Activated CD4-positive, alpha-beta T cell treated with anti-CD3 and anti-CD28 coated beads for 36 hours (primary cell): ENCODE measurements at regions of chr1 and their contacts with region 1.

Region 1: DNA sequence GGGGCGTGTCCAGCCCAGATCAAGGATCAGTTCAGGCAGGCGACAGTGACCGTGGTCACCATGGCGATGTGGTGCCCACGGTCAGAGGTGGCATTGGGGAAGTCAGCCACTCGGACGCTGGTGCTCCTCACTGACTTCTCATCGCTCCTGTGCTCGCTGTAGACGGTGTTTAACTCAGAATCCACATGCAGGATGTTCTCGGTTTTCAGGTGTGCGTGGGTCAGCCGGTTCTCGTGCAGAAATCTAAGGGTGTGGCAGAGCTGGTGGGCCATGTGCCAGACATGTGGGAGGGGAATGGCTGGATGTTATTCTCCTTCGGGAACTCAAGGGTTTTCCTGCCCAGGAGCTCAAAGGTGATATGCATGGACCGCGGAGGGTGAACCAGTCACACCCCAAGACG is 11.7 kb downstream of the OR2AJ1 start:
- DNase-seq: no peak
- ATAC-seq: no peak
- H3K4me3 Mint-ChIP-seq: no peak overlapping the region
- H3K27ac Mint-ChIP-seq: no peak overlapping the region
- H3K4me1 Mint-ChIP-seq: no peaks in the 10 kb centered on the region
- H3K27me3 Mint-ChIP-seq: peaks cover 2% of the 10 kb centered on the region

Region 2: DNA sequence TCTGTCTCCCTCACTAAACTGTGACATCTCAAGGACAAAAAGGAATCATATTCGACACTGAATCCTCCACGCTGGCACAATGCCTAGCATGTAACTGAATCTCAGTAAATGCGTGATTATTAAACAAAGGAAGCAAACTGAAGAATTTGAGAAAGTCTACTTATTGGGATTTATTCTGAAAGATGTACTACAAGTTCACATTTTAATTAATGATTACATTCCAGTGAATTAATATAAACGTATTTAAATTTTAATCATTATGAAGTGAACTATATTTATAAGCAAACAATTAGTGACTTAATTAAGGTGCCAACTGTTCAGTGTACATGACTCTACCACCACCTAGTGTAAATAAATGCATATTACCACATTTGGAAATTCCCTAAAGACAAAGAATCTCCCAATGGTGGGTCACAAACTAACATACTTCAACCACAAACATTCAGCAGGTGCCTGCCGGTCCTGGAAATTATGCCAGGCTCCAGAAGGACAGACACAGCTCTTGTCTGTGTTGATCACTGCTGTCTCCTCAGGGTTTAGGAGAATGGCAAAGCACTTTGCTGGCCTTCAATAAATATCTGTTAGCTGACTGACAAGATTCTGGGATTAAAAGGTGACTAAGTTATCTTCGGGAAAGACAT is 1485.7 kb before region 1 on chr1:
- CTCF ChIA-PET with region 1: no interaction called
- POLR2A ChIA-PET with region 1: no interaction called
- intact Hi-C with region 1: no loop called
- DNase-seq: no peak
- ATAC-seq: no peak
- H3K4me3 Mint-ChIP-seq: no peak overlapping the region
- H3K27ac Mint-ChIP-seq: no peak overlapping the region
- H3K4me1 Mint-ChIP-seq: peaks cover 13% of the 10 kb centered on the region
- H3K27me3 Mint-ChIP-seq: no peaks in the 10 kb centered on the region

Region 3: DNA sequence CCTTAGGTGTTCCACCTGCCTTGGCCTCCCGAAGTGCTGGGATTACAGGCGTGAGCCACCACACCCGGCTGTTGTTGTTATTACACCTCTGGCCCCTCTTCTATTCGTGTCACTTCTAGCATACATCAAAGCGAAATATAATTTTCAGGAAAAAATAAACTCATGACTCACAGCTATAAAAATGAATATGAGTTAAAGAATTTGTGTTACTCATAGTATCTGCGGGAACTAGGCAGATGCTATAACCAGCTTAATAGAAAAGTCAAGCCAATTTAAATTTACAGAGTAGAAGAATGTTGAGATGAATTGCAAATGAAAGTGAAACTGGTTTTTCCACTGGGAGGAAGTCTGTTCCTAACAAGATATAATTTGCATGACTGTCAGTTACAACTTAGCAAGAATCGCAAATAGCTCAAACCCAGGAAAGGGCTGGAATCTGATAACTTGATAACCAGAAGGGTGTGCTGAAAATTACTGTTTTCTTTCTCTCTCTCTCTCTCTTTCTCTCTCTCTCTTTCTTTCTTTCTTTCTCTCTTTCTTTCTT is 29.8 kb before region 1 on chr1:
- CTCF ChIA-PET with region 1: no interaction called
- POLR2A ChIA-PET with region 1: no interaction called
- intact Hi-C with region 1: loop called (anchors 1 kb)
- DNase-seq: peak; percentile 50
- ATAC-seq: peak; percentile 93
- H3K4me3 Mint-ChIP-seq: peak overlapping the region; percentile 53
- H3K27ac Mint-ChIP-seq: peak overlapping the region; percentile 61
- H3K4me1 Mint-ChIP-seq: peaks cover 33% of the 10 kb centered on the region
- H3K27me3 Mint-ChIP-seq: no peaks in the 10 kb centered on the region

Region 4: GRCh38 chr1:248622570-248623001 is 686.2 kb after region 1 on chr1:
- CTCF ChIA-PET with region 1: no interaction called
- POLR2A ChIA-PET with region 1: no interaction called
- intact Hi-C with region 1: loop called in 1 of 2 experiments (anchors 10 kb)
- DNase-seq: peak; percentile 11
- ATAC-seq: peak; percentile 80
- H3K4me3 Mint-ChIP-seq: no peak overlapping the region
- H3K27ac Mint-ChIP-seq: no peak overlapping the region
- H3K4me1 Mint-ChIP-seq: no peaks in the 10 kb centered on the region
- H3K27me3 Mint-ChIP-seq: no peaks in the 10 kb centered on the region

Region 5: GRCh38 chr1:248807067-248807737 is 870.8 kb after region 1 on chr1:
- CTCF ChIA-PET with region 1: interaction called, 5 read pairs
- POLR2A ChIA-PET with region 1: no interaction called
- intact Hi-C with region 1: loop called (anchors 1 to 5 kb)
- DNase-seq: peak; percentile 81
- ATAC-seq: peak; percentile 93
- H3K4me3 Mint-ChIP-seq: no peak overlapping the region
- H3K27ac Mint-ChIP-seq: no peak overlapping the region
- H3K4me1 Mint-ChIP-seq: no peaks in the 10 kb centered on the region
- H3K27me3 Mint-ChIP-seq: peaks cover 4% of the 10 kb centered on the region